ENCODE measurements at regions of chr11 and their contacts with region 1.

Region 1: DNA sequence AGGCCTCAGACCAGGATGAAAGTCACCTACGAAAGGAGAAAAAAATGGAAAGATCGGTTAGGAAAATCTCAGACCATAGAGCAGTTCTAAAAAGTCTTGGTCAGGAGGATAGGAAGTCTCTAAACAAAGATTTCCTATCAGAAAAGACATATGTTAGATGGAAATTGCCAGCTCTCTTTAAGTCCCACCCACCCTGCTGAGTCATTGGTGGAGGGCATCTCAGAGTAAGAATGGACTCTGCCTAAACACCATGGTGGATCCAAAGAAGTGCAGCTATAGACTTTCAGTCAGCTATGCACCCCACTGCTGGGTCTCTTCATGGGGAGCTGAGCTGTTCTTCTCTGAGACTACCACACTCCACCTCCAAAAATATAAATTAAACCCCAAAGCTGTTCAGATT is 3.7 kb downstream of the OR8B2 start:
- DNase-seq: no peak
- H3K4me3 ChIP-seq: no peak overlapping the region
- H3K27ac ChIP-seq: no peak overlapping the region
- H3K4me1 ChIP-seq: no peaks in the 10 kb centered on the region
- H3K27me3 ChIP-seq: no peaks in the 10 kb centered on the region
- CTCF ChIP-seq: no peak

Region 2: DNA sequence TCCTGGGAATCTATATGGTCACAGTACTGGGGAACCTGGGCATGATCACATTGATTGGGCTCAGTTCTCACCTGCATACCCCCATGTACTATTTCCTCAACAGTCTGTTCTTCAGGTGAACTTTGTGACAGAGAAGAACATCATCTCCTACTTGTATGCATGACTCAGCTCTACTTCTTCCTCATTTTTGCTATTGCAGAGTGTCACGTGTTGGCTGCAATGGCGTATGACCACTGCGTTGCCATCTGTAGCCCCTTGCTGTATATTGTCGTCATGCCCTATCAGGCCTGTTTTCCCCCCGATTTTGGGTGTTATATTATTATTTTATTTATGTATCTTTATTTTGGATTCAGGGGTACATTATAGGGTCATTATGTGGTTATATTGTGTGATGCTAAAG is 142.1 kb before region 1 on chr11:
- CTCF ChIA-PET with region 1: no interaction called
- dilution Hi-C with region 1: no loop called
- in situ Hi-C with region 1: no loop called
- intact Hi-C with region 1: no loop called
- DNase-seq: no peak
- H3K4me3 ChIP-seq: no peak overlapping the region
- H3K27ac ChIP-seq: no peak overlapping the region
- H3K4me1 ChIP-seq: no peaks in the 10 kb centered on the region
- H3K27me3 ChIP-seq: peaks cover 4% of the 10 kb centered on the region
- CTCF ChIP-seq: no peak

Region 3: GRCh38 chr11:124329787-124330478 is 50.7 kb before region 1 on chr11:
- CTCF ChIA-PET with region 1: no interaction called
- dilution Hi-C with region 1: no loop called
- in situ Hi-C with region 1: no loop called
- intact Hi-C with region 1: loop called (anchors 2 kb)
- DNase-seq: no peak
- H3K4me3 ChIP-seq: no peak overlapping the region
- H3K27ac ChIP-seq: no peak overlapping the region
- H3K4me1 ChIP-seq: no peaks in the 10 kb centered on the region
- H3K27me3 ChIP-seq: peaks cover 5% of the 10 kb centered on the region
- CTCF ChIP-seq: peak in 1 of 2 donors; percentile 8

Region 4: DNA sequence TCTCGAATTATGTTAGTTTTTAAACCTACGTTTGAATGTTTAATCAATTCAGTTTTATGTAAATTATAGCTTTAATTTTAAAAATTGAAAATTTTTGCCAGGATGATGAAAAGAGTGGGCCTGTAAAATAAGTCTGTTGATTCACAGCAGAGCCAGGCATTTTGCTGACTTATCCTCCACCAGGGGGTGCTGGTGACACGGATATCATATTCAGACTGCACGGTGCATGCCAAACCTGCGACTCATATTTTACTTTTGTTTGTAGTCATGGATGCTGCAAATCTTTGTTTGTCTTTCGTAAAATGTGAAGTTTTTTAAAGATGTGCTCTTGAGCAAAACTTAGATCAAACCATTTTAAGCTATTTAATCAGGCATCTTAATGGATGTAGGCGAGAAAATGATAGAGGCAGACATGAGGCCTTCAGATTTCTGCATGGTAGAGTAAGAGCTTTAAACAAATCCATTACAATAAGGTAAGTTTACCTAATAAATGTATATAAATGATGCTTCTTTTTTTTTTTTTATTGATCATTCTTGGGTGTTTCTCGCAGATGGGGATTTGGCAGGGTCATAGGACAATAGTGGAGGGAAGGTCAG is 21.8 kb after region 1 on chr11:
- CTCF ChIA-PET with region 1: no interaction called
- dilution Hi-C with region 1: no loop called
- in situ Hi-C with region 1: no loop called
- intact Hi-C with region 1: no loop called
- DNase-seq: peak; percentile 64
- H3K4me3 ChIP-seq: no peak overlapping the region
- H3K27ac ChIP-seq: no peak overlapping the region
- H3K4me1 ChIP-seq: no peaks in the 10 kb centered on the region
- H3K27me3 ChIP-seq: peaks cover 3% of the 10 kb centered on the region
- CTCF ChIP-seq: peak; percentile 83 to 90

Measured in mammary epithelial cell (primary cell).